Psoas muscle (tissue), 8 donors: ENCODE measurements at regions of chr15 and their contacts with region 1.

Region 1: DNA sequence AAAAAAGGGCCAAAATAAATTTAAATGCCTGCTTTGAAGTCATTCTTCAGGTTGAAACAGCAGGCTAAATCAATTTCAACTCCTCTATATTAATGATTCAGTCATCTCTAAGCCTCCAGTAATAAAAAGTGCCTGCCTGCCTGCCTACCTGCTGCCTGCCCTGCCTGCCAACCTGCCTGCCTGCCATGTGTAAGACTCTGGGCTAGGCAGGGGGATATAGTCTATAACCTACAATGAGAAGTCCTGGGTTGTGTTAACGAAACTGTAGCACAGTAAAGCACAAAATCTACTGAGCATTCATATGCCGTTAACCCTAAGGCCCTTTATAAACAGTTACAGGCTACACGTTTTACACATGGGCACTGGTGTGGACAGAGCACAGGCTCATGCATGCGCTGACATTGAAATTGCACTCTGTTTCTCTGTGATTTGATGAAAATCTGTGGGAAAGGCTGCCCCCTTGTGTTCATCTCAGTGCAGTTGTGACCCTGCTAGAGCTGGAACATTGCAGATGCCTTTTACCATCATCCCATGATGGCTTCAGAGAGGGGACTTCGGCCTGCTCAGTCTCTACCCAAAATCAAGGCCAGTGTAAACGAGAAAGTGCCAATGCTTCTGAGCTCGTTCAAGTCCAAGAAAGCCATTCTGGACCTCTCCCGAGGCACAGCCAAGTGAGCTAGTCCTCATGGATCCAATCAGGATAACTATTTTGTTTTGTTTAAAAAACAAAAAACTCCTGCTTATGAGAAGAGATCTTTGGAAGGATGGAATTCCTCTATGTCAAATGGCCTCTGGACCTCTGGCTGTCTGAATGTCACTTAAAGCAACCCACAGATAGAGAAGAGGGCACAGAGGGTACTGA is 64.6 kb downstream of the EFL1 start:
- DNase-seq: peak; percentile 39 to 67
- ATAC-seq: peak; percentile 70 to 87 (median 80)
- H3K4me3 ChIP-seq: no peak overlapping the region
- H3K27ac ChIP-seq: no peak overlapping the region
- H3K4me1 ChIP-seq: peaks cover 19% of the 10 kb centered on the region
- H3K27me3 ChIP-seq: no peaks in the 10 kb centered on the region
- CTCF ChIP-seq: peak; percentile 82

Region 2: DNA sequence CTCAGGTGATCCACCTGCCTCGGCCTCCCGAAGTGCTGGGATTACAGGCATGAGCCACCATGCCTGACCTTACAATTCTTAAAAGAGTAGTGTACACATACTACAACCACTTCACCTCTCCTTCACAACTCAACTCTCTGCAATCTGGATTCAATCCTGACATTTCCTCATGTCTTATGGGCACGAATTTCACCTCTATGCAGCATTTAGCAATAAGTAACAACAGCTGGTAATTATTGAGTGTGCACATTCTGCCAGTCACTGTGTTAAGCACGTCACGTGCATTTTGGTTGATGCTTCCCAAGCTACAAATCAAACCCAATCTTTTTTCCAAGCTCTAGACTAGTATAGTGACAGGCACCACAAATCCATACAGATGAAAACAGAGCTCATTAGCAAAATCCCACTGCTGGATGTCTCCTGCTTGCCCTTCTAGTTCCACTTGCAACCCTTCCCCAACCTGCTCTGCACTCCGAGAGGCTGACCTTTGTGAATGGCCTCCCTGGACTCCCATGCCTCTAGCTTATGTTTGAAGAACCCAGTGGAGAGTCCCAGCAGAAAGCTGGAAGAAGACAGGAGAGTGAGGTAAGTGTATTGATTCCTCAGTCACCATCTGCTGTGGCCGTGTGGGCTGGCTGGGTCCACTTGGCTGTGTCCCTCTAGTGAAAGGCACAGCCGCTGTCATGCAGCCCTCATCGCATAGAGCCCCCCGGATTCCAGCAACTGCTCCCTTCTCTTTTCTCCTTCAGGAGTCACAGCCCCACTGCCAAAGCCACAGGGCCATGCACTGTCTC is 328.6 kb before region 1 on chr15:
- intact Hi-C with region 1: no loop called
- DNase-seq: no peak
- ATAC-seq: no peak
- H3K4me3 ChIP-seq: no peak overlapping the region
- H3K27ac ChIP-seq: no peak overlapping the region
- H3K4me1 ChIP-seq: no peaks in the 10 kb centered on the region
- H3K27me3 ChIP-seq: peaks cover 0 to 2% (median 0%) of the 10 kb centered on the region in 3 donors
- CTCF ChIP-seq: no peak

Region 3: DNA sequence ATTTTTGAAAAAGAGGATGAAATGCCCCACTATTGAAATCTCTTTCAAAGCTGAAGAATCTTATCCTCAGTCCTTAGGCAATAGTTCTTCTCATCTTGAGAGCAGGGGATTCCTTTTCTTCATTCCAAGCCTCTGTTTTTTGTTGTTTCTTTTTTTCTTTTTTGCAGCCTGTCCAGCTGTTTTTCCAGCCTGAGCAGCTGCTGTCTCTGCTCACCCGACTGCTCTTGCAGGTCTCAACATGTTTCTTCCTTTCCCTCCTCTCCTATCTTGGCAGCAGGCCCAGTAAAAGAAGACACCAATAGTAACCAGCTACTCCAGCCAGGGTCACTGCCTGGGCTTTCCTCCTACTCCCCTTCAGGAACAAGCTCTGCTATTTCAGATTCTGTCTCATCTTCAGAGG is 176.0 kb before region 1 on chr15:
- intact Hi-C with region 1: no loop called
- DNase-seq: no peak
- ATAC-seq: peak in 1 of 4 donors; percentile 32
- H3K4me3 ChIP-seq: no peak overlapping the region
- H3K27ac ChIP-seq: no peak overlapping the region
- H3K4me1 ChIP-seq: no peaks in the 10 kb centered on the region
- H3K27me3 ChIP-seq: no peaks in the 10 kb centered on the region
- CTCF ChIP-seq: no peak

Region 4: GRCh38 chr15:82046666-82047452 is 151.1 kb before region 1 on chr15:
- intact Hi-C with region 1: loop called in 1 of 2 experiments (anchors 10 kb)
- DNase-seq: peak; percentile 94 to 96
- ATAC-seq: peak; percentile 83 to 87 (median 86)
- H3K4me3 ChIP-seq: peak overlapping the region; percentile 91
- H3K27ac ChIP-seq: peak overlapping the region; percentile 92
- H3K4me1 ChIP-seq: peaks cover 9% of the 10 kb centered on the region
- H3K27me3 ChIP-seq: no peaks in the 10 kb centered on the region
- CTCF ChIP-seq: peak; percentile 63

Region 5: GRCh38 chr15:82129761-82130160 is 68.2 kb before region 1 on chr15:
- intact Hi-C with region 1: no loop called
- DNase-seq: no peak
- ATAC-seq: no peak
- H3K4me3 ChIP-seq: no peak overlapping the region
- H3K27ac ChIP-seq: no peak overlapping the region
- H3K4me1 ChIP-seq: no peaks in the 10 kb centered on the region
- H3K27me3 ChIP-seq: no peaks in the 10 kb centered on the region
- CTCF ChIP-seq: no peak